ENCODE measurements at regions of chr9 and their contacts with region 1.

Region 1: GRCh38 chr9:33151007-33151557 is 16.1 kb downstream of the B4GALT1 start:
- DNase-seq: no peak
- ATAC-seq: no peak
- H3K4me3 Mint-ChIP-seq: no peak overlapping the region
- H3K27ac Mint-ChIP-seq: no peak overlapping the region
- H3K4me1 Mint-ChIP-seq: peaks cover 69% of the 10 kb centered on the region
- H3K27me3 Mint-ChIP-seq: no peaks in the 10 kb centered on the region

Region 2: DNA sequence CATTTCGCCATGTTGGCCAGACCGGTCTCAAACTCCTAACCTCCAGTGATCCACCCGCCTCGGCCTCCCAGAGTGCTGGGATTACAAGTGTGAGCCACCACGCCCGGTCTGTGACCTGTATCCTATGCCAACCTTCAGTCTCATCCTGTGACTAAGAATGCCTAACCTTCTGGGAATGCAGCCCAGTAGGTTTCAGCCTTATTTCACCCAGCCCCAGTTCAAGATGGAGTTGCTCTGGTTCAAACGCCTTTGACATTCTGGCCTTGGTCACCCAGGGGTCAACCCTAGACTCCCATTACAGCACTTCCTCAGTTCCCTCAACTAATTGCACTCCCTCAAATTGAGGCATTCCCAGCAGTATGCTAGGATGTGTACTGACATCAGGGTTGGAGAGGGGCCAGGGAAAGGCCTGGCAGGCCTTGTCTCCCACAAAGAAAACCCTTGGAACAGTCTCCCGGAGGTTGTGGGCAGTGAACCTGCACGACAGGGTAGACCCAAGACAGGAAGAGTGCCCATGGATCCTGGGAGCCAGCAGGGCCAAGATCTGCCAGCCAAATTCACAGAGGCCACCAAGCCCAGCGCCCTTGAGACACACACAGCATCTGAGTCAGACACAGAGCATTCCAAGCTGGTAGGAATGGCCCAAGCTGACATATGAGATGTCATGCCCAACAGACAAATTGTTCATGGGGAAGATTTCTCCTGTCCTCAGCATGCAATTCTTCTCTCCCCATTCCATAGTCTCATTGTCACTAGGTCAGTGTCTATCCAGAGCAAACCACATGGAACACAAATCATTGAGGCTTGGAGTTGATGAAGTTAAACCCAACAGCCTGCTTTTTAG is 49.8 kb before region 1 on chr9:
- CTCF ChIA-PET with region 1: no interaction called
- POLR2A ChIA-PET with region 1: no interaction called
- DNase-seq: no peak
- ATAC-seq: no peak
- H3K4me3 Mint-ChIP-seq: no peak overlapping the region
- H3K27ac Mint-ChIP-seq: no peak overlapping the region
- H3K4me1 Mint-ChIP-seq: peaks cover 13% of the 10 kb centered on the region
- H3K27me3 Mint-ChIP-seq: no peaks in the 10 kb centered on the region

Region 3: DNA sequence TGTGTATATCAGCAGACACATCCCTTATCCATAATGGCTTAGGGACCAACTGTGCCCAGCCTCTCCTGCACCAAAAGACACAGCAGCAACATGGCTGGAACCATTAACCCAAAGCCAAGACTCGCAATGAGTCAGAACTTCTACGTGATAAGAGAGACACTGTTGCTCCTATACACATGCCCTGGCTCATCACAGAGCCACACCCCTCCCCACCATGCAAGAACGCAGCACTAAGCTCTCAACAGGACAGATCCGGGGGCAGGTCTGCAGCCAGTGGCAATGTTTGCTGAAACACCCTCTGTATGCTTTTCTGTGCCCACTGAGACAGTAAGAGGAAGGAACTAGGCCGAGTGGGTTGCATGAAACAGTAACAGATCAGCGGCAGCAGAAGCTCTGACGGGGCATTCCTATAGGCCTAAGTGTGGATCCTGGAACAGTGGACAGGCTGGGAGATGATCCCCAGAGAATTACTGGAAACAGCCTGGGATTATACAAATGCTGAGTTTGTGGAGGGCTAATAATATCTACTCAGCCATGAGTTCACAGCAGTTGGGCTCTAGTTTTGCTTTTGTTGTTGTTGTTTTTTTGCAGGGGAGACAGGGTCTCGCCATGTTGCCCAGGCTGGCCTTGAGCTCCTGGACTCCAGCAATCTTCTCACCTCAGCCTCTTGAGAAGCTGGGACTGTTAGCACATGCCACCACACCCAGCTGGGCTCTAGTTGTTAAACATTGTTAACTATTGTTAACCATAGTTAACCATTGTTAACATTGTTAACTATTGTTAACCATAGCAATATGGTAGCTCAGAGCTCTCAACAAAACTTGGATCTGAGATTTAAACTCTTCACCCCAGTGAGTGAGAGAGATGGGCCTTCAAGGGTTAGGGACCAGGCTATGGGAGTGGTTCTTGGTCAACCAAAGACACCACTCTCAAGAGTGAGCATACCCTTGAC is 24.9 kb before region 1 on chr9:
- CTCF ChIA-PET with region 1: no interaction called
- POLR2A ChIA-PET with region 1: no interaction called
- DNase-seq: no peak
- ATAC-seq: no peak
- H3K4me3 Mint-ChIP-seq: no peak overlapping the region
- H3K27ac Mint-ChIP-seq: peak overlapping the region; percentile 19
- H3K4me1 Mint-ChIP-seq: peaks cover 21% of the 10 kb centered on the region
- H3K27me3 Mint-ChIP-seq: no peaks in the 10 kb centered on the region

Region 4: GRCh38 chr9:33139421-33140228 is 11.5 kb before region 1 on chr9:
- CTCF ChIA-PET with region 1: interaction called, 16 read pairs
- POLR2A ChIA-PET with region 1: interaction called, 3 read pairs
- DNase-seq: no peak
- ATAC-seq: no peak
- H3K4me3 Mint-ChIP-seq: no peak overlapping the region
- H3K27ac Mint-ChIP-seq: peak overlapping the region; percentile 31
- H3K4me1 Mint-ChIP-seq: peaks cover 87% of the 10 kb centered on the region
- H3K27me3 Mint-ChIP-seq: no peaks in the 10 kb centered on the region

Region 5: DNA sequence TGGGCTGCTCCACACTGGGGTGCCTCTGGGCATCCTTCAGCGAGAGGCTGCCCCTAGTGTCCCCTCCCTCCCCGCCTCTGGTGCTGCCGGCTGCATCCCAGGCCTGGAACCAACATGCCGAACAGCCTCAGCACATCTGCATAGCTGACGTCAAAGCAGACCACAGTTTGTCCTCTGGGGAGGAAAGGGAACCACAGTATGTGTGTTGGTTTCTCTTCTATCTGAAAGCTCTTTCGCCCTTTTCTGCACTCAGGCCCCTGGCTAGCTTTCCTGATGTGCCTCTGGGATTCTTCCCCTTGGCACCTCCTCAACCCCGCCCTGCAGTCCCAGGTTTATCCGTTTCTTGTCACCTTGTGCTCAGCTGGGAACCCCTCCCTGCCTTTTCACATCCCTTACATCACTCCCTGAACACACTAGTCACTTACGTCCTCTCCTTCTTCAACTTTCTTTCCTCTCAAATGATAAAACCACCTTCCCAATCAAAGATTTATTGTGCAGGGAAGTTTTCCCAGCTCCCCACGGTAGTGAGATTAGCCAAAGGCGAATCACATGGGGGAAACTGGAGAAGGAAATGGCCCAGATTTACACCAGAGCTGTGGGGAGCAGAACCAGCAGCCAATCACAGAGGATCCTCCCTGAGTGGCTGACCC is 51.6 kb after region 1 on chr9:
- CTCF ChIA-PET with region 1: no interaction called
- POLR2A ChIA-PET with region 1: no interaction called
- DNase-seq: peak; percentile 74
- ATAC-seq: peak; percentile 97
- H3K4me3 Mint-ChIP-seq: peak overlapping the region; percentile 40
- H3K27ac Mint-ChIP-seq: peak overlapping the region; percentile 72
- H3K4me1 Mint-ChIP-seq: peaks cover 33% of the 10 kb centered on the region
- H3K27me3 Mint-ChIP-seq: peaks cover 11% of the 10 kb centered on the region

Region 6: DNA sequence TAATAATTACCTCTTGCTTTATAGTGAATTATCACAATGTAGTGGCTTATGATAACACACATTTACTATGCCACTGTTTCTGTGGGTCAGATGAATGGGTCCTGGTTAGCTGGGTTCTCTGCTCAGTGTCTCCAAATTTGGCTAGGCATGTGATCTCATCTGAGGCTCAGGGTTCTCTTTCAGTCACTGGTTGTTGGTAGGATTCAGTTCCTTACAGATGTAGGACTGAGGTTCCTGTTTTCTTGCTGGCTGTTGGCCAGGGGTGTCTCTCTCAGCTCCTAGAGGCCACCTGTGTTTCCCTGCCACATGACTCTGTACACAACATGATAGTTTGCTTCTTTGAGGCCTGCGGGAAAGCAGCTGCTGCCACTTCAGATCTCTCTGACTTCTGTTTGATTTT is 146.3 kb after region 1 on chr9:
- CTCF ChIA-PET with region 1: no interaction called
- POLR2A ChIA-PET with region 1: no interaction called
- DNase-seq: no peak
- ATAC-seq: peak; percentile 45
- H3K4me3 Mint-ChIP-seq: peak overlapping the region; percentile 0
- H3K27ac Mint-ChIP-seq: peak overlapping the region; percentile 53
- H3K4me1 Mint-ChIP-seq: peaks cover 72% of the 10 kb centered on the region
- H3K27me3 Mint-ChIP-seq: no peaks in the 10 kb centered on the region

Measured in activated CD8-positive, alpha-beta T cell treated with anti-CD3 and anti-CD28 coated beads, Interleukin-2, amount 10 ng/mL, durations not matched to agents 7 days and 5 days (primary cell).